ENCODE measurements at regions of chr10 and their contacts with region 1.

Region 1: DNA sequence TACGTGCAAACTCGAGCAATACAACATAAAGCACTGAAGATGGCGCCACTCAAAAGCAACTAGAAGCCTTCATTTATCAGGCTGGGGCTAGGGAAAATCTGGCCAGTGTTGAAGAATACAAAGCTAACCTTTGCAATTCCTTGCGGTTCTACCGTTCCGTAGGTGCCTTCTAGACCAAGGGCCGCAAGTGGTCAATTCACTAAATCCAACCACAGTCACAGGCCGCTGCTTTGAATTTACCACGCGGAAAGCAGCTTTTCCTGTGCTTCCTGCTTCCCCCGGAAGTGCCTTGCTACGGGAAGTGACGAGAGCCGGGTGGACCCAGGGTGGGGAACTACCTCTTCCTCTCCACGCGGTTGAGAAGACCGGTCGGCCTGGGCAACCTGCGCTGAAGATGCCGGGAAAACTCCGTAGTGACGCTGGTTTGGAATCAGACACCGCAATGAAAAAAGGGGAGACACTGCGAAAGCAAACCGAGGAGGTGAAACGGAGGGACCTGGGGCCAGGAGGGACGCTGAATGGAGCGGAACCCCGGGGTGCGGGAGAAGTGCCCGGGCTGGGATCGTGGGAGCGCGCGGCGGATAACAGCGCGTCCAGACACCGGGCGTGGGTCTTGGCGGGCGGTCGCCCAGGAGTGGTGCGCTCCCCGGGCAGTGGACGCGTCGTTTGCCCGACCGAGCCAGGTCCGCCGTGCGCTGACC is at the start of gene DDX21:
- DNase-seq: peak; percentile 81 to 94
- ATAC-seq: peak; percentile 84 to 93 (median 87)
- H3K4me3 ChIP-seq: peak within 1 kb of the TSS; percentile 72
- H3K4me3 Mint-ChIP-seq: peak within 1 kb of the TSS; percentile 99
- H3K27ac ChIP-seq: peak within 1 kb of the TSS; percentile 86
- H3K27ac Mint-ChIP-seq: peak within 1 kb of the TSS; percentile 99
- H3K4me1 ChIP-seq: peaks cover 25% of the 10 kb centered on the region
- H3K4me1 Mint-ChIP-seq: peaks cover 31 to 38% of the 10 kb centered on the region in 2 donors
- H3K27me3 ChIP-seq: no peaks in the 10 kb centered on the region
- H3K27me3 Mint-ChIP-seq: no peaks in the 10 kb centered on the region
- CTCF ChIP-seq: peak; percentile 77
- total RNA-seq, gene DDX21: 59.0 to 62.1 (median 59.8) TPM

Region 2: GRCh38 chr10:68901104-68901927 is 54.7 kb before region 1 on chr10 and contains the start of gene DDX50:
- intact Hi-C with region 1: loop called (anchors 1 kb)
- DNase-seq: peak; percentile 94 to 98
- ATAC-seq: peak; percentile 92 to 99 (median 93)
- H3K4me3 ChIP-seq: peak within 1 kb of the TSS; percentile 93
- H3K4me3 Mint-ChIP-seq: peak within 1 kb of the TSS; percentile 97
- H3K27ac ChIP-seq: peak within 1 kb of the TSS; percentile 95
- H3K27ac Mint-ChIP-seq: peak within 1 kb of the TSS; percentile 99 to 100
- H3K4me1 ChIP-seq: peaks cover 21% of the 10 kb centered on the region
- H3K4me1 Mint-ChIP-seq: peaks cover 35 to 42% of the 10 kb centered on the region in 2 donors
- H3K27me3 ChIP-seq: no peaks in the 10 kb centered on the region
- H3K27me3 Mint-ChIP-seq: peaks cover 6 to 7% of the 10 kb centered on the region in 2 donors
- CTCF ChIP-seq: no peak
- total RNA-seq, gene DDX50: 28.3 to 33.1 (median 31.9) TPM

Region 3: DNA sequence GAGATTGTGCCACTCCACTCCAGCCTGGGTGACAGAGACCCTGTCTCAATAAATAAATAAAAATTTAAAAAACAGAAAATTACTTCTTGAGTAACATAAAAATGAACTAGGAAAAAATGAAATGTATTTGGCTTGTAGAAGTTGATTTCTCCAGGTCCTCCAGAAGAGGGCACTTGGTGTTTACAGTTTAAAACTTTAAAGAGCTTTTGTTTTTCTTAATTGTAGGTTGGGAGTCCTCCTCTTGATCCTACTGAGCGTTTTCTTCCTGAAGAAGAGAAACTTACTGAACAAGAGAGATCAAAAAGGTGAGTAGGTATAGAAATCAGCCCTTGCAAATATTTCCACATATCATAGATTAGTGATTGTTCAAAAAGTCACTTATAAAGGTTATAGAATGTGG is 48.8 kb after region 1 on chr10:
- intact Hi-C with region 1: no loop called
- DNase-seq: peak in 1 of 2 donors; percentile 74
- ATAC-seq: peak; percentile 67 to 90 (median 72)
- H3K4me3 ChIP-seq: no peak overlapping the region
- H3K4me3 Mint-ChIP-seq: no peak overlapping the region
- H3K27ac ChIP-seq: no peak overlapping the region
- H3K27ac Mint-ChIP-seq: peak overlapping the region; percentile 50 to 60
- H3K4me1 ChIP-seq: no peaks in the 10 kb centered on the region
- H3K4me1 Mint-ChIP-seq: peaks cover 5 to 8% of the 10 kb centered on the region in 2 donors
- H3K27me3 ChIP-seq: no peaks in the 10 kb centered on the region
- H3K27me3 Mint-ChIP-seq: no peaks in the 10 kb centered on the region
- CTCF ChIP-seq: peak; percentile 79

Region 4: DNA sequence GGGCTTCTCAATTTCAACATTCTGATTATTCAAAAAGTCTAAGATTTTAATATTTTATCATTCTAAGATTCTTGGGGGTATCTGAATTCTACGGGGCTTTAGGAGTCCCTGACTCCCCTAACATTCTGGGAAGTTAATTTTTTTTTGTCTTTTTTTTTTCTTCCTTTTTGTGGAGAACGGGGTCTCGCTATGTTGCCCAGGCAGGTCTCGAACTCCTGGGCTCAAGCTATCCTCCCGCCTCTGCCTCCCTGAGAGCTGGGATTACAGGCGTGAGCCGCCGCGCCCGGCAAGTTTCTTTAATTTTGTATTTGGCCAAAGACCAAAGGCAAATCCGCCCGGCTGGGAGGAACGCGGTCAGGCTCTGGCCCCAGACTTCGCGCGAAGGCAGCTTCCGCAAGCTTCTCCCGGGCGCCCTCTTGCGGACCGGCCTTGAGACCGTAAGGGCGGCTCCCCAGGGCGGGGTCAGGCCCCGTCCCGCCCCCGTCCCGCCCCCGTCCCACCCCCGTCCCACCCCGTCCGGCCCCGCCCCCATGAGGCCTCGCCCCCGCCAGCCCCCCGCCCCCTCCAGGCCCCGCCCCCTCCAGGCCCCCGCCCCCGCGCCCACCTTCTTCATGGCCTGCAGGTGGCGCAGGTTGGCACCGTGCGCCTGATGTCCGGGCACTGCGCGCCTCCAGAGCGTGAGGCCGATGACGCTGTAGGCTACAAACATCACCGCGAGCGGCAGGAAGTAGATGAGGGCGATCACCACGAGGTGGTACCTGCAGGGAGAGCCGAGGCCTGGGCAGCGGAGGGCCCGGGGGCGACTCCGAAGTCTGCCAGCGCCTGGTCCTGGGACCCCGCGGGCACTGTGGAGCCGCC is 452.6 kb after region 1 on chr10:
- intact Hi-C with region 1: loop called (anchors 5 kb)
- DNase-seq: peak; percentile 90 to 97
- ATAC-seq: peak; percentile 91 to 96 (median 91)
- H3K4me3 ChIP-seq: peak overlapping the region; percentile 9
- H3K4me3 Mint-ChIP-seq: peak overlapping the region; percentile 82
- H3K27ac ChIP-seq: peak overlapping the region; percentile 84
- H3K27ac Mint-ChIP-seq: peak overlapping the region; percentile 83 to 91
- H3K4me1 ChIP-seq: peaks cover 21% of the 10 kb centered on the region
- H3K4me1 Mint-ChIP-seq: peaks cover 7 to 23% of the 10 kb centered on the region in 2 donors
- H3K27me3 ChIP-seq: no peaks in the 10 kb centered on the region
- H3K27me3 Mint-ChIP-seq: no peaks in the 10 kb centered on the region
- CTCF ChIP-seq: peak; percentile 80

Measured in natural killer cell (primary cell).